ENCODE measurements at regions of chr7 and their contacts with region 1.

Region 1: DNA sequence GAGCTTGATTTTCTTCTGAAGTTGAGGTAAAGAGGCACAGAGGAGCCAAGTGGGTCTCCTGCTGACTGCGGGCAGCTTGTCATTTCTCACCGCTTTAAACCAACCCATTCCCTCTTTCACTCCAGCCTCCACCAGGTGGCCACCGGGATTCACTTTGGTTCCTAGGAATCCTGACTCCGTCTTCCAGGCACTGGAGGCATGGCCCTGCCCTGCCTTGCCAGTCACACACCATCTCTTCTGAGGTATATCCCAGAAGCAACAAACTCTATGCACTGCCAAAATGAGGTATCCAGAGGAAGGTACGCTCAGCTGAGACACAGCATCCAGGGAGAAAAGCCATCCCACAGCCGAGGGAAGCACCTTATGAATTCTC is 280.8 kb downstream of the TNS3 start:
- DNase-seq: no peak
- ATAC-seq: no peak
- H3K4me3 ChIP-seq: no peak overlapping the region
- H3K27ac ChIP-seq: peak overlapping the region; percentile 14
- H3K4me1 ChIP-seq: peaks cover 2% of the 10 kb centered on the region
- H3K27me3 ChIP-seq: no peaks in the 10 kb centered on the region

Region 2: GRCh38 chr7:47273974-47274766 is 26.9 kb before region 1 on chr7:
- intact Hi-C with region 1: loop called in 1 of 4 experiments (anchors 2 kb)
- DNase-seq: no peak
- ATAC-seq: no peak
- H3K4me3 ChIP-seq: no peak overlapping the region
- H3K27ac ChIP-seq: no peak overlapping the region
- H3K4me1 ChIP-seq: no peaks in the 10 kb centered on the region
- H3K27me3 ChIP-seq: no peaks in the 10 kb centered on the region

Region 3: GRCh38 chr7:47435889-47436312 is 134.8 kb after region 1 on chr7:
- intact Hi-C with region 1: no loop called
- DNase-seq: peak; percentile 75 to 90 (median 81)
- ATAC-seq: peak; percentile 88 to 90
- H3K4me3 ChIP-seq: no peak overlapping the region
- H3K27ac ChIP-seq: no peak overlapping the region
- H3K4me1 ChIP-seq: no peaks in the 10 kb centered on the region
- H3K27me3 ChIP-seq: no peaks in the 10 kb centered on the region

Measured in right cardiac atrium (tissue), 5 donors.